Thyroid gland (tissue), 4 donors: ENCODE measurements at regions of chr5 and their contacts with region 1.

Region 1: DNA sequence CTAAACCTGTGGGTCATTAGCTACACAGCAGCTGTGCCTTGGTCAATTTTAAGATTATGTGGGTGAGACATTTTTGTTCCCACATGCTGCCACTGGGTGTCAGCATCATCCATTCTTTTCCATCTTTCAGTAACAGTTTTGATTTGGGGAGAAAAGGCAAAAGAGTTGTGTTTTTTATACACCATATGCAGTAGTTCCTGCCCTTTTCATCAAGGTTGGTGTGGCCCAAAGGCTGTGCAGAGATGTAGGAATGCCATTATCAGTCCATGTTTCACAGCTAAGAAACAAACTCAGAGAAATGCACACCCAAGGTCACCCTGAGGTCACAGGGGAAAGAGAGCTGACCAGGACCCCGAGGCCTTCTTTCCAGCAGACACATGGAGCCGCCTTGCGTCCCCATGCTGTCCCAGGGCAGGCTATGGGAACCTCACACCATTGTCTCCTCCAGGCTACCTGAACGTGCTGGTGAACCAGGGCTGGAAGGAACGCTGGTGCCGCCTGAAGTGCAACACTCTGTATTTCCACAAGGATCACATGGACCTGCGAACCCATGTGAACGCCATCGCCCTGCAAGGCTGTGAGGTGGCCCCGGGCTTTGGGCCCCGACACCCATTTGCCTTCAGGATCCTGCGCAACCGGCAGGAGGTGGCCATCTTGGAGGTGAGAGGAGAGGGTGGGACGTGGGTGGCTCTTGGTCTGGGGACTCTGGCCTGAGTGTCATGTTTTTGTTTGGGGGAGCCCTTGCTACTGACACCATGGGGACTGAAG is 27.8 kb upstream of the GRPEL2 start:
- DNase-seq: peak; percentile 24 to 35
- H3K4me3 ChIP-seq: no peak overlapping the region
- H3K27ac ChIP-seq: no peak overlapping the region
- H3K4me1 ChIP-seq: peaks cover 12 to 14% of the 10 kb centered on the region in 2 donors
- H3K27me3 ChIP-seq: no peaks in the 10 kb centered on the region
- CTCF ChIP-seq: peak in 5 of 6 experiments; percentile 44 to 84 (median 68)
- POLR2A ChIP-seq: no peak

Region 2: DNA sequence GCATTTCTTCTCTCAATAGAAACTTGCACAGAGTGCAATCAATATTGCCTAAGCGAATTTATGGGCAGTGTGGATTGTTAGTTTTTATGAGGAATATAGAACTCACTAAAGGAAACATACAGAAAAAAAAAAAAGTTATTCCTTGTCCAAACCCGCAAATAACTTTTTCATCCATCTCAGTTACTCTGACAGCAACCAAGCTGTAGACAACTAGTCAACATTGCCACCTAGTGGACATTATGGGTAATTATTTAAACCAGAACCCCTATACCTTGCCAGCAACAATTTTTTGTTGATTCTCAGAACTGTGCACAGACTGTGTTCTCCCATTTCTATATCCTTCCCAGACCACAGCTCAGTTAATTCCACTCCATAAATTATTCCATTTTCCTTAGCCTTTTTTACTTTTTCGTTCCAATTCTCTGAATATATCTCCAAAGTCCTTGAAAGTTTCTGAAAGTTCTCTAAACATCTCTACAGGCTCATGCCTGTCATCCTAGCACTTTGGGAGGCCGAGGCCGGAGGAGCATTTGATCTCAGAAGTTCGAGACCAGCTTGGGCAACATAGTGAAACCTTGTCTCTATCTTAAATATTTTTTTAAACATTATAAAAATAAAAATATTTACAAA is 48.4 kb before region 1 on chr5:
- intact Hi-C with region 1: no loop called
- DNase-seq: no peak
- H3K4me3 ChIP-seq: no peak overlapping the region
- H3K27ac ChIP-seq: no peak overlapping the region
- H3K4me1 ChIP-seq: peaks cover 6 to 13% of the 10 kb centered on the region in 2 donors
- H3K27me3 ChIP-seq: no peaks in the 10 kb centered on the region
- CTCF ChIP-seq: peak; percentile 28 to 64 (median 53)
- POLR2A ChIP-seq: no peak

Region 3: GRCh38 chr5:149371296-149371962 is 54.0 kb after region 1 on chr5:
- intact Hi-C with region 1: loop called (anchors 5 kb)
- DNase-seq: peak; percentile 50 to 60
- H3K4me3 ChIP-seq: no peak overlapping the region
- H3K27ac ChIP-seq: no peak overlapping the region
- H3K4me1 ChIP-seq: no peaks in the 10 kb centered on the region
- H3K27me3 ChIP-seq: no peaks in the 10 kb centered on the region
- CTCF ChIP-seq: peak; percentile 36 to 74 (median 48)
- POLR2A ChIP-seq: no peak

Region 4: DNA sequence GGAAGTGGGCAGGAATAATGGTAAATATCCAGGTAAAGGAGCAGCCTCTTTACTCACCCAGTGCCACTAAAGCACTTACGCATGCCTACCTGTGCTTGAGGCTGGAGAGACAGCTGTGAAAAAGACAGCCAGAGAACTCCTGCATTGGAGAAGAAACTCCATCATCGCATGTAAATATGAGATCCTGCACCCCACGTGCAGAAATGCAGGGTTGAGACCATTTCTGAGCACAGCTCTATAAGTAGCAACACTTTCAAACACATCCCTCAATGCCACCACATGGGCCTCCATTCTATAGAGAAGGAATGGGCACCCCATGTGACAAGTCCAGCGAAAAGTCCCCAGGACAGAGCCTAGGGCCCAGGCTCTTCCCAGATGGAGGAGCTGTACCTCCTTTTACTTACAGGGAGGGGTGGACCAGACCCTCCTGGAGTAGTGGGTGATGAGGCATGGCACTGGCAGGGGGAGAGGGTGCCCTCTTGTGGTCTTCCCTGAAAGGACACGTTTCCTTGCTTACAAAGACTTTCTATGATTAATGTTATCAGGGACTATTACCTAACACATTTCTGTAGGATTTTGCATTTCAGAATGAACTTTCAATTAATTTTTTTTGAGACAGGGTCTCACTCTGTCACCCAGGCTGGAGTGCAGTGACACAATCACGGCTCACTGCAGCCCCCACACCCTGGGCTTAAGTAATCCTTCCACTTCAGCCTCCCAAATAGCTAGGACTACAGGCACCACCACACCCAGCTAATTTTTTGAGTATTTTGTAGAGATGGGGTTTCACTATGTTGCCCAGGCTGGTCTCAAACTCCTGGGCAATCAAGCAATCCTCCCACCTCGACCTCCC is 116.9 kb after region 1 on chr5:
- intact Hi-C with region 1: loop called (anchors 5 kb)
- DNase-seq: peak; percentile 46 to 57
- H3K4me3 ChIP-seq: no peak overlapping the region
- H3K27ac ChIP-seq: no peak overlapping the region
- H3K4me1 ChIP-seq: no peaks in the 10 kb centered on the region
- H3K27me3 ChIP-seq: no peaks in the 10 kb centered on the region
- CTCF ChIP-seq: peak; percentile 40 to 89 (median 60)
- POLR2A ChIP-seq: no peak

Region 5: DNA sequence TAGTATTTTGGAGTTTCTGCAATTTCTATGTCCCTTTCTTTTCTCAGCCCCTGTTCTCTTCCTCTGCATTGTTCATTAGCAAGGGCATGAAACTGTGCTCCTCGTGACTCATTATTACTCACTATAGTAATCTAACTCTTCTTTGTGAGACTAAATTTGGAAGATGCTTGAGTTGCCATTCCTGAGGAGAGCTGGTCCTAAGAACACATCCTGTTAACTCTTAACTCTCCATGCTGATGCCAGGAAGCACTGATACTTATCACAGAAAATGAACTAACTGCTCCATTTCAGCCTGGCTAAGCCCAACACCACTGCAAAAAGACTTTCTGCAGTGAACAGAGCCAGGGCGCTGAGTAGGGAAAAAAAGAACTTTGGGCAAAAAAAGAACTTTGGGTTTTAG is 244.4 kb after region 1 on chr5:
- intact Hi-C with region 1: loop called (anchors 10 kb)
- DNase-seq: no peak
- H3K4me3 ChIP-seq: no peak overlapping the region
- H3K27ac ChIP-seq: peak overlapping the region; percentile 56 to 64 (median 62)
- H3K4me1 ChIP-seq: peaks cover 9 to 19% of the 10 kb centered on the region in 2 donors
- H3K27me3 ChIP-seq: no peaks in the 10 kb centered on the region
- CTCF ChIP-seq: no peak
- POLR2A ChIP-seq: no peak